Astrocyte of the cerebellum (primary cell): ENCODE measurements at regions of chr12 and their contacts with region 1.

Region 1: GRCh38 chr12:4412465-4412864 is 33.0 kb upstream of the FGF23 start:
- DNase-seq: no peak
- H3K4me3 ChIP-seq: no peak overlapping the region
- CTCF ChIP-seq: no peak

Region 2: DNA sequence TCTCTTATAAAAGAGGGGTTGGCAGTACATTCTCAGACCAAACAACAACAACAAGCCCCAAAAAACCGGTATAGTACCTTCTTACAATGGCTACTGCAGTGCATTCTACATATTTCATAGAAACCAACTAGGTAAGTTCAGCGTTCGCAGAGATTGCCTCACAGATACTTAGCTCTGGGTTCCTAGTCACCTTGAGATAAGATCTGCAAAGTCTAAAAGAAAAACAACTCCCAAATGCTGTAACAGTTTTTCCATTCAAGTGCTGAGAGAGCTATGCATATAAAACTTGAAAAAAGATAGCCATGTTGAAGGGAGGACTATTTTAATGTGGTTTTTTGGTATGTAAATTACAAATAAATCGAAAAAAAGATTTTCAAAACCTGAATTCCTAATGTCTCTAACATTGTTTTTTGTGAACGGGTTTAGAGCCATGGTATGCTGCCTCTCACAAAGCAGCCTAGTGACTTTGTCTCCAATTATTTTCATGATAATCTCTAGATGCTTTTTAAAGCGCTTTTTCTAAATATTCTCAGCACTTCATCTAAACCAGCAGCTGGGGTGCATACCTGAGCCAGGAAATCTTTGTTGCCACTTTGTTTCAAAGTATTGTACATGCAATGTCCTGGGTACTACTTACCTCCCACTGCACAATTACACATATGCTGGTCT is 603.0 kb before region 1 on chr12:
- in situ Hi-C with region 1: no loop called
- DNase-seq: no peak
- H3K4me3 ChIP-seq: no peak overlapping the region
- CTCF ChIP-seq: no peak

Region 3: GRCh38 chr12:4490973-4491372 is 78.5 kb after region 1 on chr12:
- in situ Hi-C with region 1: loop called (anchors 5 kb)
- DNase-seq: no peak
- H3K4me3 ChIP-seq: no peak overlapping the region
- CTCF ChIP-seq: no peak